Common myeloid progenitor, CD34-positive (primary cell): ENCODE measurements at regions of chr4 and their contacts with region 1.

Region 1: DNA sequence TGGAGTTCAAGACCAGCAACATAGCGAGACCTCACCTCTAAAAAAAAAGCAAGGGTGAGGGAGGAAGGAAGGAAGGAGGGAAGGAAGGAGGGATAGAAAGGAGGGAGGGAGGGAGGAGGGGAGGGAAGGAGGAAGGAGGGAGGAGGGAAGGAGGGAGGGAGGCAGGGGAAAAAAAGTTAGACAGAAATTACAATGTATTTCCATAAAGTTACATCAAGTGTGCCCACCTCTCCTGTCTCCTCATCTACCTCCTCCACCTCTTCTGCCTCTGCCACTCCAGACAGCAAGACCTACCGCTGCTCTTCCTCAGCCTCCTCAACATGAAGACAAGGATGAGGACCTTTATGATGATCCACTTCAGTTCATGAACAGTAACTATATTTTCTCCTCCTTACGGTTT is 8.3 kb downstream of the LIN54 start:
- DNase-seq: no peak
- H3K4me3 ChIP-seq: no peak overlapping the region
- H3K27ac ChIP-seq: no peak overlapping the region
- H3K4me1 ChIP-seq: no peaks in the 10 kb centered on the region
- H3K27me3 ChIP-seq: no peaks in the 10 kb centered on the region

Region 2: GRCh38 chr4:82861529-82861928 is 140.8 kb before region 1 on chr4:
- CTCF ChIA-PET with region 1: no interaction called
- POLR2A ChIA-PET with region 1: no interaction called
- DNase-seq: no peak
- H3K4me3 ChIP-seq: no peak overlapping the region
- H3K27ac ChIP-seq: no peak overlapping the region
- H3K4me1 ChIP-seq: peaks cover 0 to 7% (median 5%) of the 10 kb centered on the region in 4 experiments
- H3K27me3 ChIP-seq: no peaks in the 10 kb centered on the region

Region 3: DNA sequence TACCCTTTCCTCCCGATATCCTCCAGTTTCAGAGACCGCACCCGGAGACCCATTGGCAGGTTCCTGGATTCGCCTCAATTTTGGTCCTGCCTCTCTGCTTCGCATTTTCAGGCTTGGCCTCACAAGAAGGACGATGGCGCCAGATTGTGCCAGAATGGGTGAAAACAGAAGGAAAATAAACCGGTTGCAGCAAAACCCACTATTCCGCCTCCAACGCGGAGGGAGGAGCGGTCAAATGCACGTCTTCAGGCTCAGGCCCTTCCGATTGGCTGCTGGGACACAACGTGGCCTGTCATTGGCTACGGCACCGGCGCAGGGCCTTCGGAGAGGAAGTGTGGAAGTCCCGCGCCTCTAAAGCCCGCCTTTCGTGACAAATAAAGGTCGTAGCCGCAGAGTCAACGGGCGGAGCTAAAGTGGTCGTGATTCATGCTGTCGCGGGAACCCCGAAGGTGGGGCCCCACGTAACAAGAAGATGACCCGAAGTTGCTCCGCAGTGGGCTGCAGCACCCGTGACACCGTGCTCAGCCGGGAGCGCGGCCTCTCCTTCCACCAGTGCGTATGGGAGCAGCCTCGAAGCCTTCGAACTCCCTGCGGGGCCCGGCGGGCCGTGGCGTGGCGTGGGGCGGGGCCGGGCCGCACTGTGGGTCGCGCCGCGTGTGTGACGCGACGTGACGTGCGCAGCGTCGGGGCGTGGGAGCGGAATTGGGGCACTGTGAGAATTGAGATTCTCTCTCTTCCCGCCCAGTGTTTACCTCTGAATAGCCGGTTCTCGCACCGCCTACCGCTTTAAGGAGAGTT is 101.8 kb before region 1 on chr4 and contains the start of gene THAP9:
- CTCF ChIA-PET with region 1: no interaction called
- POLR2A ChIA-PET with region 1: no interaction called
- DNase-seq: peak; percentile 100
- H3K4me3 ChIP-seq: peak within 1 kb of the TSS; percentile 71 to 98 (median 89)
- H3K27ac ChIP-seq: peak within 1 kb of the TSS; percentile 92 to 97
- H3K4me1 ChIP-seq: peaks cover 24 to 53% (median 43%) of the 10 kb centered on the region in 4 experiments
- H3K27me3 ChIP-seq: no peaks in the 10 kb centered on the region

Region 4: GRCh38 chr4:82913305-82913704 is 89.0 kb before region 1 on chr4:
- CTCF ChIA-PET with region 1: no interaction called
- POLR2A ChIA-PET with region 1: no interaction called
- DNase-seq: no peak
- H3K4me3 ChIP-seq: no peak overlapping the region
- H3K27ac ChIP-seq: no peak overlapping the region
- H3K4me1 ChIP-seq: no peaks in the 10 kb centered on the region
- H3K27me3 ChIP-seq: no peaks in the 10 kb centered on the region

Region 5: DNA sequence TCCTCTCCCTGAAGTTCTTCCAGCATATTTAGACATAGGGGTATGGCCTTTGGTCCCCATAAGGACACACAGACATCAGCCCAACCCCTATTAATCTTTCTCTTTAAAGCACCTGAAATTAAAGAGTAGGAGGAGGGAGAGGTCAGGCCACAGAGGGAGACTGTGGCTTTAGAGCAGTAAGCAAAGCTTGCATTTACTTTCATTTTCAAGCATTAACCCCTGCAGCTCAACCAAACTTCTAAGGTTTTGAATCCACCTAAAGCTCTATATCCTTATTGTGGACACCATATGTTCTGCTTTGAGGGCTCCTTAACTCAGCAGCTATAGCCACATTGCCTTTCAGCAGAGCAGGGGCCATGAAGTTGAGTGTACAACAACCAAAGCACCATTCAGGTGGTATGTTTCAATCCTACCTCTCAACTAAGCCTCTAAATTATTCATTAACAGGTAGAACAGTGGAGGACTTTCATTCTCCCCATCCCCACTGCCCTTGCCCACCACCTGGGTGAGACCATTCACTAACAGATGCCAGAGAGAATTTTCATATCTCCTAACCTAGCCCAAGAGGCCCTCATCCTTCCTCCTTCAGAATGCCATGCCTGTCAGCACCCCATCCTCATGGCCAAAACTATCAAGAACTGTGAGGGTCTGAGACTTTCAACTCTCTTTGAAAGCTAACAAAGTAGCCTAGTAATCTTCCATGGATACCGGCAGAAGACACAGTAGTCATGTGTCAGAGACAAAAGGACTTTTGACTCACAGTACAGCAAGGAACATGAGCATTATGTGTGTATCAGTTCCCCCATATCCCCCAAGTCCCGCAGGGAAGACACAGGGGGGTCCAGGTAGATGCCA is 12.5 kb before region 1 on chr4:
- CTCF ChIA-PET with region 1: interaction called, 16 read pairs
- POLR2A ChIA-PET with region 1: no interaction called
- DNase-seq: peak in 2 of 3 donors; percentile 62 to 77
- H3K4me3 ChIP-seq: peak overlapping the region in 6 of 7 experiments; percentile 31 to 66 (median 44)
- H3K27ac ChIP-seq: peak overlapping the region; percentile 48 to 72
- H3K4me1 ChIP-seq: peaks cover 2 to 14% (median 6%) of the 10 kb centered on the region in 4 experiments
- H3K27me3 ChIP-seq: no peaks in the 10 kb centered on the region

Region 6: GRCh38 chr4:83012687-83013419 is 10.5 kb after region 1 on chr4:
- CTCF ChIA-PET with region 1: no interaction called
- POLR2A ChIA-PET with region 1: no interaction called
- DNase-seq: peak; percentile 97 to 99 (median 98)
- H3K4me3 ChIP-seq: peak overlapping the region; percentile 77 to 97 (median 83)
- H3K27ac ChIP-seq: peak overlapping the region; percentile 81 to 89
- H3K4me1 ChIP-seq: peaks cover 21 to 39% (median 29%) of the 10 kb centered on the region in 4 experiments
- H3K27me3 ChIP-seq: no peaks in the 10 kb centered on the region